GM12878 (cell line): ENCODE measurements at regions of chr7 and their contacts with region 1.

Region 1: DNA sequence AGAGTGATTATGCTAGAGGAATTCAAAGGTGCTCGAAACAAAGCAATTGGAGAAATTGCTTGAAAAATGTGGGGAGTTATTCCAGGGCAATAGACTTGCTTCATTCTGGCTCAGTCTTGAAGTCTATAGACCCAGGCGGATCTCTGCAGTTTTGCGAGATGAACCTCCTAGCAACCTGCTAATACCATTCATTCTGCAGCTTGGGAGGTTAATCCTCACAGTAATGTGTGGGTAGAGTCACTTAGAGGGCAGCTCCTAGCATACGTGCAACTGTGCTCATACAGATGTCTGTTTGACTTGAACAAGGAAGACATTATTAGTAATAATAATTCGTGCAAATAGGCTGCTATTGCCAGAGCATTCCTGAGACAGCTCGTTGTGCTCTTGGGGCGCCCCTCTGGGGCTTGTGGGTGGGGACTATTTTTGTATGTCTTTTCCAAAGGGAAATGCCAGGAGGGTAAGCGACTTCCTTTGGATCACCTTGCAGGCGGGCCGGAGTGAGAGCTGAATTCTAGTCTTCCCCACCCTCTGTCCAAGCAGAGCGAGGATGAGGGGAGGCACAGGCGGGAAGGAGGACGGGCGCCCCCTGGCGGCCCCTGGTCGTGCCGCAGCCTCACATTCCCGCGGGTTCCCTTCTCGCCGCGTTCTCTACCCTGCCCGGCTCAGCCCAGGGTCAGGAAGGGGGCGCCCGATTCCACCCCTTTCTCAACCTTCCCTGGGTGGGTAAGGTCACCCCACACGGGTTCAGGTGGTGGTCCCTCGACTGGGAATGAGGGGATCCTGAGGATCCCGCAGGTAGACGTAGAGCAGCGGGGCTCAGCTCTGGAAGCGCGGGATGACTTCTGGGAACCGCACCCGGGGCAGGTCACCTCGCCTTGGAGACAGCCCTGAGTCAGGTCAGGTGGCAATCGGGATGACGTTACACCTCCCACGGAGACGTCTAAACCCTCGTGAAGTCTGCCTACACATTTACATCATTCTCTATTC is 241.5 kb downstream of the PHTF2 start:
- DNase-seq: no peak
- ATAC-seq: peak; percentile 98
- H3K4me3 ChIP-seq: no peak overlapping the region
- H3K27ac ChIP-seq: no peak overlapping the region
- H3K4me1 ChIP-seq: no peaks in the 10 kb centered on the region
- H3K27me3 ChIP-seq: no peaks in the 10 kb centered on the region; a peak in 2 of 4 replicates
- CTCF ChIP-seq: peak; percentile 81 to 92 (median 85)
- EP300 ChIP-seq: no peak
- POLR2A ChIP-seq: no peak
- RAD21 ChIP-seq: peak; percentile 67

Region 2: GRCh38 chr7:77667459-77668086 is 372.5 kb before region 1 on chr7:
- CTCF ChIA-PET with region 1: no interaction called
- POLR2A ChIA-PET with region 1: no interaction called
- RAD21 ChIA-PET with region 1: no interaction called
- SMC1A ChIA-PET with region 1: no interaction called
- in situ Hi-C with region 1: loop called (anchors 10 kb)
- intact Hi-C with region 1: no loop called
- DNase-seq: no peak
- ATAC-seq: no peak
- H3K4me3 ChIP-seq: no peak overlapping the region
- H3K27ac ChIP-seq: no peak overlapping the region
- H3K4me1 ChIP-seq: no peaks in the 10 kb centered on the region
- H3K27me3 ChIP-seq: no peaks in the 10 kb centered on the region
- CTCF ChIP-seq: no peak
- EP300 ChIP-seq: no peak
- POLR2A ChIP-seq: no peak
- RAD21 ChIP-seq: no peak

Region 3: GRCh38 chr7:77823787-77824186 is 216.3 kb before region 1 on chr7:
- CTCF ChIA-PET with region 1: no interaction called
- POLR2A ChIA-PET with region 1: no interaction called
- RAD21 ChIA-PET with region 1: no interaction called
- SMC1A ChIA-PET with region 1: no interaction called
- in situ Hi-C with region 1: no loop called
- intact Hi-C with region 1: no loop called
- DNase-seq: no peak
- ATAC-seq: peak; percentile 67
- H3K4me3 ChIP-seq: no peak overlapping the region; the same call in 1 of the 2 replicates
- H3K27ac ChIP-seq: peak overlapping the region; percentile 67
- H3K4me1 ChIP-seq: peaks cover 18% of the 10 kb centered on the region
- H3K27me3 ChIP-seq: no peaks in the 10 kb centered on the region
- CTCF ChIP-seq: no peak
- EP300 ChIP-seq: no peak
- POLR2A ChIP-seq: no peak
- RAD21 ChIP-seq: no peak

Region 4: GRCh38 chr7:77940647-77941046 is 99.4 kb before region 1 on chr7:
- CTCF ChIA-PET with region 1: interaction called, 39 read pairs
- POLR2A ChIA-PET with region 1: no interaction called
- RAD21 ChIA-PET with region 1: interaction called, 5 read pairs
- SMC1A ChIA-PET with region 1: interaction called, 22 read pairs
- in situ Hi-C with region 1: loop called (anchors 5 kb)
- intact Hi-C with region 1: loop called (anchors 1 kb)
- DNase-seq: no peak
- ATAC-seq: peak; percentile 75
- H3K4me3 ChIP-seq: no peak overlapping the region
- H3K27ac ChIP-seq: no peak overlapping the region
- H3K4me1 ChIP-seq: no peaks in the 10 kb centered on the region
- H3K27me3 ChIP-seq: no peaks in the 10 kb centered on the region
- CTCF ChIP-seq: peak; percentile 44 to 66 (median 53); a peak in 5 of 6 replicates
- EP300 ChIP-seq: no peak
- POLR2A ChIP-seq: no peak
- RAD21 ChIP-seq: peak; percentile 73

Region 5: DNA sequence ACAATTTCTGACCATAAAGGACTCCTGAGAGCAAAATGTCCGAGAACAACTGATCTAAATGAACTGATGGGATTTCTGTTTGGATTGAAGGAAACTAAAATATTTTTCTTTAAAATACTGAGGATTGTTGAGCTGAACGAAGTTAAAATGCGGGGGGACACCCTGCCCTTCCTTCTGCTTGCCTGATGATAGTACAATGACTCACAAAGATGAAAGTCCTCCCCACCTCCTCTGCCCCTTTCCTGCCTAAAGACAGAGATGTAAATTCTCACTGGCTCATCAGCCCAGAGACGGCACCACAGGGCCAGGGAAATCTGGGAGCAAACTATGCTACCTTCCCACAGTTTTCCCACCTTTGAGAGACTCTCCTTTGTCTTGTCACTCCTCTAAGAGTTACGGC is 60.9 kb before region 1 on chr7:
- CTCF ChIA-PET with region 1: no interaction called
- POLR2A ChIA-PET with region 1: no interaction called
- RAD21 ChIA-PET with region 1: no interaction called
- SMC1A ChIA-PET with region 1: no interaction called
- in situ Hi-C with region 1: no loop called
- intact Hi-C with region 1: no loop called
- DNase-seq: no peak
- ATAC-seq: no peak
- H3K4me3 ChIP-seq: no peak overlapping the region
- H3K27ac ChIP-seq: no peak overlapping the region
- H3K4me1 ChIP-seq: no peaks in the 10 kb centered on the region
- H3K27me3 ChIP-seq: no peaks in the 10 kb centered on the region
- CTCF ChIP-seq: no peak
- EP300 ChIP-seq: no peak
- POLR2A ChIP-seq: no peak
- RAD21 ChIP-seq: no peak

Region 6: GRCh38 chr7:77989981-77990566 is 50.0 kb before region 1 on chr7:
- CTCF ChIA-PET with region 1: interaction called, 11 read pairs
- POLR2A ChIA-PET with region 1: no interaction called
- RAD21 ChIA-PET with region 1: no interaction called
- SMC1A ChIA-PET with region 1: no interaction called
- in situ Hi-C with region 1: no loop called
- intact Hi-C with region 1: no loop called
- DNase-seq: no peak
- ATAC-seq: no peak
- H3K4me3 ChIP-seq: no peak overlapping the region
- H3K27ac ChIP-seq: no peak overlapping the region
- H3K4me1 ChIP-seq: no peaks in the 10 kb centered on the region
- H3K27me3 ChIP-seq: peaks cover 0 to 2% of the 10 kb centered on the region in 2 experiments; a peak in 2 of 4 replicates
- CTCF ChIP-seq: peak; percentile 4 to 37 (median 21); a peak in 2 of 6 replicates
- EP300 ChIP-seq: no peak
- POLR2A ChIP-seq: no peak
- RAD21 ChIP-seq: 0 out of 2 replicates have a peak, but pooled peaks have one; percentile 2

Region 7: GRCh38 chr7:78002021-78002420 is 38.1 kb before region 1 on chr7:
- CTCF ChIA-PET with region 1: no interaction called
- POLR2A ChIA-PET with region 1: no interaction called
- RAD21 ChIA-PET with region 1: no interaction called
- SMC1A ChIA-PET with region 1: no interaction called
- in situ Hi-C with region 1: no loop called
- intact Hi-C with region 1: no loop called
- DNase-seq: no peak
- ATAC-seq: no peak
- H3K4me3 ChIP-seq: no peak overlapping the region
- H3K27ac ChIP-seq: no peak overlapping the region
- H3K4me1 ChIP-seq: no peaks in the 10 kb centered on the region
- H3K27me3 ChIP-seq: no peaks in the 10 kb centered on the region
- CTCF ChIP-seq: no peak
- EP300 ChIP-seq: no peak
- POLR2A ChIP-seq: no peak
- RAD21 ChIP-seq: no peak

Region 8: DNA sequence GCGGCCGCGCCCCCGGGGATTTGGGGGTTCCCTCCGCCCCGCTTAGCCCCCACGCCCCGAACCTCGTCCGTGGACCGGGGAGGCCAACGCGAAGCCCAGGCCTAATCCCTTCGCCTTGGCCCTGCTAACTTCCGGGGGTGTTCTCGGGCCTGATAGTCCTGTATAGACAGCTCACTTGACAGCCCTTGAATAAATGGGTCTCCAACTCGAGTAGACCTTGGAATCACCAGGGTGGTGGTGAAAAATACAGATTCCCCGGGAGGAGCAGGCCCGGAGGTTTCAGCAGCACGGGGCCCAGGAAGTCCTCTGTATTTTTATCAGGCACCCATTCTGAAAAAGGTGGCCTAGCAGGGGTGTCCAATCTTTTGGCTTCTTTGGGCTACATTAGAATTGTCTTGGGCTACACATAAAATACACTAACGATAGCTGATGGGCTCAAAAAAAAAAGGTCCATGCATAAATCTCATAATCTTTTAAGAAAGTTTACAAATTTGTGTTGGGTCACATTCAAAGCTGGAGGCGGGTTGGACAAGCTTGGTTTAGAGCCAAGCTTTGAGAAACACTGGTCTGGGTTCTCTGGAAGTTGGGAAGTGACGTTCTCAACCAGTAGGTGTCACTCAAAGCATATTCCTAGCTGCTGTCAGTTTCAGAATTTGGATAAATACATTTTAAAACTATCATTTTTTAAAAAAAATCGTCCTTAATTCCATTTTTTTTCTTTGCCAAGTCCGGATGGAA is 19.8 kb before region 1 on chr7:
- CTCF ChIA-PET with region 1: interaction called, 56 read pairs
- POLR2A ChIA-PET with region 1: no interaction called
- RAD21 ChIA-PET with region 1: interaction called, 5 read pairs
- SMC1A ChIA-PET with region 1: interaction called, 15 read pairs
- in situ Hi-C with region 1: no loop called
- intact Hi-C with region 1: no loop called
- DNase-seq: peak; percentile 17
- ATAC-seq: peak; percentile 75
- H3K4me3 ChIP-seq: 0 out of 2 replicates have a peak overlapping the region, but pooled peaks have one; percentile 87
- H3K27ac ChIP-seq: no peak overlapping the region
- H3K4me1 ChIP-seq: no peaks in the 10 kb centered on the region; the same call in 1 of the 2 replicates
- H3K27me3 ChIP-seq: peaks cover 3 to 10% of the 10 kb centered on the region in 2 experiments; a peak in 3 of 4 replicates
- CTCF ChIP-seq: peak; percentile 53 to 62 (median 54); a peak in 5 of 6 replicates
- EP300 ChIP-seq: no peak
- POLR2A ChIP-seq: no peak
- RAD21 ChIP-seq: peak; percentile 66